Calu3 (cell line): ENCODE measurements at regions of chrX and their contacts with region 1.

Region 1: DNA sequence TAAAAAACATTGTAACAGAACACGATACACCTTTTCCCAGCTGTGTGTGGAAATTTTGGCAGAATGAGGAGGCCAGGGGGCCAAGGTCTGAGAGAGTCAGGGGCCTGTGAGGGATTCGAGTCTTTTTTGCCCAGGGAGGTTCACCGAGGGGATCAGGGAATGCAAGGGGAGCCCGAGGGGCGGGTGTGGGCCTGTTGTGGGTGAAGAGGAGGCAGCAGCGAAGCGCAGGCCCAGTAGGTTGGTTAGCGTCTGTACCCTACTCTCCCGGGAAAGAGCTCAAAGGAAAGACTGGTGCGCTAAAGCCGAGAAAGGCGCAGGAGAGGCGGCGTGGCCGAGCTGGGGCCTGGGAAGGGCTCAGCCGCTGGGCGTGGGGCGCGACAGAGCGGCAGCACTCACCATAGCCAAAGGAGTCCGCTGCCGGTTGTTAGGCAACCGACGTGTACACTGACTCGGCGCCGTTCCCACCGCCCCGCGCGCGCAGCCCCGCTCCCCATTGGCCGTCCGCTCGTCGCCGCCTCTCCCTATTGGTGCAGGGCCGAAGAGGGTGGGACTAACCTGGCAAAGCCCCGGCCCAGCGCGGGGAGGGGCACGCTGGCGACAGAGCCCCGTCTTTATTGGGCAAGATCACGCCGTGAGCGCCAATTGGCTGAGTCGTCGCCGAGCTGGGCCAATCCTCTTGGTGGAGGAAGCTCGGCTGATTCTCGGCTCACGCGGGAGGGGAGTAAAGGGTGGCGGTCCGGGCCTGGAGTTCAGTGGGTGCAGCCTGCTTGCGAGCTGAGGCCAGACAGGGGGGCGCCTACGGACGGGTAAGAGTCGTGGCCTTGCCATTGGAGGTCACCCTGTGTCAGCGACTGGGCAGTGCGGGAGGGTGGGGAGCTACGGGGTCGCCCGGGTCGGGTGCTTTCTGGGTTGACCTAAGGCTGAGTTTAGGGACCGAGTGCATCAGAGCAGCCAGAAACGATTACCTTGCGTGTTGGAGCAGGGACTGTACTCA is at the starts of genes CETN2 and NSDHL:
- DNase-seq: peak; percentile 96
- H3K4me3 Mint-ChIP-seq: peak within 1 kb of the TSS; percentile 90
- H3K27ac Mint-ChIP-seq: peak within 1 kb of the TSS; percentile 94
- H3K4me1 Mint-ChIP-seq: peaks cover 25% of the 10 kb centered on the region
- H3K27me3 Mint-ChIP-seq: no peaks in the 10 kb centered on the region
- CTCF ChIP-seq: no peak
- total RNA-seq, gene CETN2: 38.5 and 40.2 TPM in 2 replicates
- total RNA-seq, gene NSDHL: 36.5 and 38.1 TPM in 2 replicates

Region 2: GRCh38 chrX:152926279-152926678 is 95.7 kb after region 1 on chrX:
- CTCF ChIA-PET with region 1: no interaction called
- intact Hi-C with region 1: loop called (anchors 1 kb)
- DNase-seq: peak; percentile 79
- H3K4me3 Mint-ChIP-seq: no peak overlapping the region
- H3K27ac Mint-ChIP-seq: no peak overlapping the region
- H3K4me1 Mint-ChIP-seq: peaks cover 9% of the 10 kb centered on the region
- H3K27me3 Mint-ChIP-seq: no peaks in the 10 kb centered on the region
- CTCF ChIP-seq: peak; percentile 39

Region 3: DNA sequence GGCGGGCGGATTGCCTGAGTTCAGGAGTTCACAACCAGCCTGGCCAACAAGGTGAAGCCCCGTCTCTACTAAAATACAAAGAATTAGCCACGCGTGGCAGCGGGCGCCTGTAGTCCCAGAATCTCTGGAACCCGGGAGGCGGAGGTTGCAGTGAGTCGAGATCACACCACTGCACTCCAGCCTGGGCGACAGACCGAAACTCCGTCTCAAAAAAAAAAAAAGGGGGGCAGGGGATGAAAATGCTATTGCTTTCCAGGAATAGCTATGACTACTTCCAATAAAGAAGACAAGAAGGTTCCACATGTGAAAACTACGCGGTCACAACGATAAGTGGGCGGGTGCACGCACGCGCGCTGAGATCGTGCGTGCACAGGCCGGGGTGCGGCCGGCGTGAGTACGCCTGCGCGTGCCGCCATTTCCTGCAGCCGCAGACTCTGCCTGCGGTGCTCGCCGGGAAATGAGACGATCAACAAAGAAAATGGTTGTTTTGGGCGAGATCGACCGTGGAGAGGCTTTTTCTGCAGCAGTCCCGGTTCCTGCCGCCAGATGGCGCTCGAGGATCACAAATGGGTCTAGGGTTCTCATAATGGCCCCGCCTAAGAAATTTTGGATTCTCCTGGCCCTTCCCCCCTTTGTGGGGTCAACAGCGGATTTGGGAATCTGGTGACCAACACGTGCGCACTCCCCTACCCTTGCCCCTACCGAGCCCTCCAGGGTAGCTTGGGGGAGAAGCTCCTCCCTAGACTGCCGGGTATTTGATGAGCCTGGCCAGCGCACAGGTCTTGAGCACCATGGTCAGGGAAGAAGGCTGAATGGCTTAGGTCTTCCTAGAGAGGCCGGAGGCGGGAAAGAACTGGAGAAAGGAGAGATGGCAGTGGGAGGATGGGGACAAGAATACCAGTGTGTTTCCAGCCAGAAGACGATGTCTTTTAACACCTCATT is 128.2 kb after region 1 on chrX:
- CTCF ChIA-PET with region 1: no interaction called
- intact Hi-C with region 1: no loop called
- DNase-seq: peak; percentile 78
- H3K4me3 Mint-ChIP-seq: peak overlapping the region; percentile 52
- H3K27ac Mint-ChIP-seq: no peak overlapping the region
- H3K4me1 Mint-ChIP-seq: no peaks in the 10 kb centered on the region
- H3K27me3 Mint-ChIP-seq: no peaks in the 10 kb centered on the region
- CTCF ChIP-seq: peak; percentile 84